Breast epithelium (tissue), 4 donors: ENCODE measurements at regions of chr2 and their contacts with region 1.

Region 1: GRCh38 chr2:237857791-237858190 is 1.6 kb upstream of the RAMP1 start:
- DNase-seq: no peak
- H3K4me3 ChIP-seq: no peak overlapping the region
- H3K27ac ChIP-seq: no peak overlapping the region
- H3K4me1 ChIP-seq: peaks cover 0 to 4% of the 10 kb centered on the region in 2 donors
- H3K27me3 ChIP-seq: peaks cover 0 to 15% of the 10 kb centered on the region in 2 donors
- CTCF ChIP-seq: no peak
- POLR2A ChIP-seq: no peak

Region 2: GRCh38 chr2:237882510-237883481 is 25.0 kb after region 1 on chr2:
- intact Hi-C with region 1: loop called (anchors 1 kb)
- DNase-seq: peak in 1 of 2 donors; percentile 34
- H3K4me3 ChIP-seq: no peak overlapping the region
- H3K27ac ChIP-seq: no peak overlapping the region
- H3K4me1 ChIP-seq: no peaks in the 10 kb centered on the region
- H3K27me3 ChIP-seq: no peaks in the 10 kb centered on the region
- CTCF ChIP-seq: no peak
- POLR2A ChIP-seq: no peak